H1 (cell line): ENCODE measurements at regions of chr7 and their contacts with region 1.

Region 1: DNA sequence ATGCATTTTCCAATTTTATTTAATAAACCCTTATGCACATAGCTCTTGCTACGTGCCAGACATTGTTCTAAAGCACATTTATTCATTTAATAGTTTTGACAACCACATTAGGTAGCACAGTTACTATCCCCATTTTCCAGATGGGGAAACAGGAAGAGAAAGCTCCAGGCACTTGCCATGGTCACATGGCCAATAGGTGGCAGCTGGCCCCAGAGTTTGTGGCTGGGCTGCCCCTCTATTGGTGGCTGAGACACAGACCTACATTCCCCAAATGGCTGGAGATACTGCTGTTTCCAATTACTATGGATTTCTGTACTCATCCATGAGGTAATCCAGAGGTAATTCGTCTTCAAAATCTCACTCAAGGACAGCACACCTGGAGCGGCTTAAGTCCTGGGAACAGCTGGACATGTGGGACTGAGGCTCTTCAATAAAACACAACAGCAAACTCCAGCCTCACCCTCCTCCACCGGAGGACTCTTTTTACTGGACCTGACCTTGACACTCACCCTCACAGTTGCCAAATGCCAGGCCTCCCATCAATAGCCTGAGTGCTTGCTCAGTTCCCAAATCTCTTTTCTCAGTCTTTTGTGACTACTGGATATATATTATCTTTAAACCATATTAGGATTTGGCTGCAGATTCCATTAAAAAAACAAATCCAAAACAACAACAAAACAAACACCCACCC is 106.1 kb downstream of the CLEC2L start:
- DNase-seq: no peak
- H3K4me3 ChIP-seq: no peak overlapping the region
- H3K27ac ChIP-seq: no peak overlapping the region
- H3K4me1 ChIP-seq: peaks cover 0 to 5% (median 2%) of the 10 kb centered on the region in 4 experiments; a peak in 2 of 7 replicates
- H3K27me3 ChIP-seq: no peaks in the 10 kb centered on the region
- CTCF ChIP-seq: peak; percentile 24 to 28 (median 27); a peak in 2 of 4 replicates
- EP300 ChIP-seq: no peak
- POLR2A ChIP-seq: no peak
- RAD21 ChIP-seq: peak; percentile 29 to 54

Region 2: GRCh38 chr7:139613971-139614411 is 15.5 kb before region 1 on chr7:
- CTCF ChIA-PET with region 1: interaction called, 71 read pairs
- POLR2A ChIA-PET with region 1: no interaction called
- DNase-seq: peak; percentile 9 to 54
- H3K4me3 ChIP-seq: no peak overlapping the region; a peak in 1 of 8 replicates
- H3K27ac ChIP-seq: no peak overlapping the region
- H3K4me1 ChIP-seq: peaks cover 3 to 15% (median 7%) of the 10 kb centered on the region in 4 experiments; a peak in 6 of 7 replicates
- H3K27me3 ChIP-seq: no peaks in the 10 kb centered on the region
- CTCF ChIP-seq: peak in 1 of 3 experiments; percentile 12; a peak in 1 of 4 replicates
- EP300 ChIP-seq: no peak
- POLR2A ChIP-seq: no peak
- RAD21 ChIP-seq: peak in 1 of 2 experiments; percentile 15; a peak in 2 of 4 replicates

Region 3: GRCh38 chr7:139714163-139714901 is 84.8 kb after region 1 on chr7:
- CTCF ChIA-PET with region 1: no interaction called
- POLR2A ChIA-PET with region 1: no interaction called
- DNase-seq: no peak
- H3K4me3 ChIP-seq: no peak overlapping the region
- H3K27ac ChIP-seq: no peak overlapping the region
- H3K4me1 ChIP-seq: peaks cover 11 to 33% (median 20%) of the 10 kb centered on the region in 4 experiments
- H3K27me3 ChIP-seq: no peaks in the 10 kb centered on the region
- CTCF ChIP-seq: no peak
- EP300 ChIP-seq: no peak
- POLR2A ChIP-seq: no peak
- RAD21 ChIP-seq: no peak